ENCODE measurements at regions of chr12 and their contacts with region 1.

Region 1: GRCh38 chr12:91161009-91161408 is 21.6 kb downstream of the DCN start:
- DNase-seq: no peak
- ATAC-seq: no peak

Region 2: DNA sequence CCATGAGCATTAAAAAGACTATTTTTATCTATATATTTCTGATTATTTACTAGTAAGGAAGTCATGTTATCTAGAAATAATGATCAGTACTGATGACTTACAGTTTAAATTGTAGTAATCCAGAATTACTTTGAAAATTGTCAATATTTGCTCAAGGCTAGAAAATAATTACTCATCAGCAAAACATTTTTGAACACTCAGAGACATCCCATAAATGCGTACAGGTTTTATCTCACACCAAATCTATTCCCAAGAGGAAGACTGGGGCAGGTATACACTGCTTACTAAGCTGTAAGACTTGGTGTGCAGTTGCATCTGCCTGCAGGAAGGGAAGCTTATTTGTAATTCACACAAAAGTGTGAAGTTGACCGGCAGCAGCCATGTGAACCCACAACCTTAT is 352.5 kb before region 1 on chr12:
- intact Hi-C with region 1: no loop called
- DNase-seq: no peak
- ATAC-seq: no peak

Region 3: GRCh38 chr12:90987520-90987919 is 173.5 kb before region 1 on chr12:
- intact Hi-C with region 1: no loop called
- DNase-seq: no peak
- ATAC-seq: no peak

Region 4: GRCh38 chr12:91205826-91206225 is 44.8 kb after region 1 on chr12:
- intact Hi-C with region 1: loop called (anchors 2 kb)
- DNase-seq: no peak
- ATAC-seq: no peak

Region 5: GRCh38 chr12:91355150-91356006 is 194.4 kb after region 1 on chr12:
- intact Hi-C with region 1: no loop called
- DNase-seq: peak; percentile 83
- ATAC-seq: peak; percentile 96

Region 6: GRCh38 chr12:91388552-91388965 is 227.6 kb after region 1 on chr12:
- intact Hi-C with region 1: no loop called
- DNase-seq: no peak
- ATAC-seq: no peak